Naive thymus-derived CD4-positive, alpha-beta T cell (primary cell): ENCODE measurements at regions of chr12 and their contacts with region 1.

Region 1: DNA sequence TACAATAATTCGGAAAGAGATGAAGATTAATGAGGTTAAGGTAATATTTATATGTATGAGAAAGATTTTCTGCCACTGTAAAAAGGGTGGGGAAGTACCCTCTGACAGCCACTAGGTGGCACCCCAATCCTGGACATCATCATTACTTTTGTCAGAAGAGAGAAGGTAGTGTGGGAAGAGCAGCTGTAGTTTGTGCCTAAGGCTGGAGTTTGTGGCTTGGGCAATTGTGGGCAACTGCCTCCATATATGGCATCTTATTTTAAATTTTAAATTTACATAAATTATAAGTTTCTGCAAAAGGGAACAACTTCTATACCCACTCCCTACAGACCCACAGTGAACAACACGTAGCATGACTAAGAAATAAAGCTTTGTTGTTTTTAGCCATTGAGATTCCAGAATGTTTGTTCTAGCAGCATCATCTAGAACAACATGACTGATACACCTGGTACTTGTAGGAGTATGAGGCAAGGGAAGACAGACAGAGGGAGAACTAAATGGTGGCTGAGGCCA is 34.4 kb upstream of the SYCP3 start:
- DNase-seq: peak; percentile 37 to 76 (median 72)
- ATAC-seq: peak; percentile 94
- H3K4me3 ChIP-seq: no peak overlapping the region
- H3K4me3 Mint-ChIP-seq: no peak overlapping the region
- H3K27ac ChIP-seq: no peak overlapping the region
- H3K27ac Mint-ChIP-seq: peak overlapping the region in 2 of 9 donors; percentile 25 to 65
- H3K4me1 ChIP-seq: no peaks in the 10 kb centered on the region
- H3K4me1 Mint-ChIP-seq: peaks cover 0 to 50% (median 9%) of the 10 kb centered on the region in 7 donors
- H3K27me3 ChIP-seq: no peaks in the 10 kb centered on the region
- H3K27me3 Mint-ChIP-seq: no peaks in the 10 kb centered on the region

Region 2: DNA sequence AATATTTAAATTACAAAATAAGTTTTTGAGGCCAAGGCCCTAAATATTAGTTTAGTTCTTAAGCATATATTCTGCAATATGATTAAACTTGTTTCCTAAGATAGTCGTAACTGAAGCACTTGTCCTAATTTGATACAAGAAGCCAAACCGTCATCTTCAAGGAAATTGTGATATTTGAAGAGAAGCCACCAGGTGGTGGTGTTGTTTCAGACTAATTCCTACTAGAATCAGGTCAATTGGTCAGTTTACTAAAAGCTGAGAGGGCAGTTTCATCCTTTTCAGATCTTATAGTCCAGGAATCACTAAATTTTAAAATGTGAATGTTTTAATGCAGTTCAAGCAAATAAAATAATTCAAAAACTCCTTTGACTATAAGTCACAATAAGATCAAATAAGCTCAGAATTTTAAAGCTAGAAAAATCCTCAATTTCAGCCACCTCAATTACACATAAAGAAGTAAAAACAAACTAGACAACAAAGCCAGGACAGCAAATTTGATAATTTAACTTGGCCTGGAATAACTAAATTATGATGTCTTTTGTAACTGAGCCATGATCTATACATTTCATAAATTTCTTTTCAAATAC is 359.1 kb before region 1 on chr12:
- CTCF ChIA-PET with region 1: no interaction called
- POLR2A ChIA-PET with region 1: no interaction called
- intact Hi-C with region 1: loop called in 1 of 2 experiments (anchors 5 kb)
- DNase-seq: peak in 5 of 9 donors; percentile 11 to 23 (median 12)
- ATAC-seq: peak; percentile 40
- H3K4me3 ChIP-seq: no peak overlapping the region
- H3K4me3 Mint-ChIP-seq: no peak overlapping the region
- H3K27ac ChIP-seq: no peak overlapping the region
- H3K27ac Mint-ChIP-seq: no peak overlapping the region
- H3K4me1 ChIP-seq: no peaks in the 10 kb centered on the region
- H3K4me1 Mint-ChIP-seq: peaks cover 0 to 5% (median 0%) of the 10 kb centered on the region in 7 donors
- H3K27me3 ChIP-seq: no peaks in the 10 kb centered on the region
- H3K27me3 Mint-ChIP-seq: peaks cover 0 to 29% (median 2%) of the 10 kb centered on the region in 5 donors

Region 3: GRCh38 chr12:101655393-101655792 is 118.3 kb before region 1 on chr12:
- CTCF ChIA-PET with region 1: no interaction called
- POLR2A ChIA-PET with region 1: no interaction called
- intact Hi-C with region 1: no loop called
- DNase-seq: no peak
- ATAC-seq: no peak
- H3K4me3 ChIP-seq: no peak overlapping the region
- H3K4me3 Mint-ChIP-seq: no peak overlapping the region
- H3K27ac ChIP-seq: no peak overlapping the region
- H3K27ac Mint-ChIP-seq: no peak overlapping the region
- H3K4me1 ChIP-seq: no peaks in the 10 kb centered on the region
- H3K4me1 Mint-ChIP-seq: no peaks in the 10 kb centered on the region
- H3K27me3 ChIP-seq: no peaks in the 10 kb centered on the region
- H3K27me3 Mint-ChIP-seq: peaks cover 10 to 29% (median 22%) of the 10 kb centered on the region in 5 donors

Region 4: GRCh38 chr12:101792051-101792931 is 18.6 kb after region 1 on chr12:
- CTCF ChIA-PET with region 1: interaction called, 6 read pairs
- POLR2A ChIA-PET with region 1: no interaction called
- intact Hi-C with region 1: loop called (anchors 1 to 2 kb)
- DNase-seq: peak in 5 of 9 donors; percentile 6 to 13 (median 10)
- ATAC-seq: peak; percentile 59
- H3K4me3 ChIP-seq: no peak overlapping the region
- H3K4me3 Mint-ChIP-seq: no peak overlapping the region
- H3K27ac ChIP-seq: no peak overlapping the region
- H3K27ac Mint-ChIP-seq: peak overlapping the region in 8 of 9 donors; percentile 2 to 75 (median 16)
- H3K4me1 ChIP-seq: peaks cover 0 to 3% of the 10 kb centered on the region in 2 donors
- H3K4me1 Mint-ChIP-seq: peaks cover 0 to 42% (median 18%) of the 10 kb centered on the region in 7 donors
- H3K27me3 ChIP-seq: no peaks in the 10 kb centered on the region
- H3K27me3 Mint-ChIP-seq: no peaks in the 10 kb centered on the region

Region 5: GRCh38 chr12:101823891-101824290 is 50.2 kb after region 1 on chr12:
- CTCF ChIA-PET with region 1: interaction called, 61 read pairs
- POLR2A ChIA-PET with region 1: interaction called, 22 read pairs
- intact Hi-C with region 1: no loop called
- DNase-seq: peak; percentile 28 to 87 (median 82)
- ATAC-seq: peak; percentile 100
- H3K4me3 ChIP-seq: no peak overlapping the region
- H3K4me3 Mint-ChIP-seq: peak overlapping the region; percentile 15 to 84 (median 64)
- H3K27ac ChIP-seq: no peak overlapping the region
- H3K27ac Mint-ChIP-seq: peak overlapping the region; percentile 33 to 97 (median 85)
- H3K4me1 ChIP-seq: peaks cover 5 to 24% of the 10 kb centered on the region in 2 donors
- H3K4me1 Mint-ChIP-seq: peaks cover 41 to 81% (median 78%) of the 10 kb centered on the region in 7 donors
- H3K27me3 ChIP-seq: no peaks in the 10 kb centered on the region
- H3K27me3 Mint-ChIP-seq: no peaks in the 10 kb centered on the region